CD8-positive, alpha-beta memory T cell (primary cell): ENCODE measurements at regions of chr13 and their contacts with region 1.

Region 1: DNA sequence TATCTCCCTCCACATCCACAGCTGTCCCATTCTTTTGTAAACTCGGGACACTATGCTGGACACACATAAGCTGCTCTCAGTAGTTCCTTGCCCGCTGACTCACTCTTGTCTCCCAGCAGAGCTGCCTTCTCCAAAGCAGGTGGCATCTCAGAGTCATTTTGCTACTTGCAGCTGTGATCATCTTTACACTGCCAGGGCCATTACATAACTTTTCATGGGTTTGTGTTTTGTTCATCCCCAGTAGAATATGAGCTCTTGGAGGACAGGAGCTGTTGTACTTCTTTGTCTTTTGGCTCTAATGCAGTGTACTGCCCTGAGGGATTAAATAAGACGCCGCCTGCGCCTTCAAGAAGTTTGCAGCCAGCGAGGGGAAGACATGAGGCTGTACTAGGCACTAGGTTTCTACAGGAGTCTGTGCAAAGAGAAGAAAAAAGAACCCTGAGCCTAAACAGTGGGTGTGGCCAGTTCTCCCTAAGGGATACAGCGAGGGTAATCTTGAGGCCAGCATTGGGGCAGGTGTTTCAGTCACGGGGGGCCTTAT is 40.8 kb upstream of the GPR183 start:
- DNase-seq: no peak
- H3K4me3 ChIP-seq: no peak overlapping the region
- H3K4me3 Mint-ChIP-seq: peak overlapping the region in 4 of 7 donors; percentile 17 to 57 (median 46)
- H3K27ac ChIP-seq: no peak overlapping the region
- H3K27ac Mint-ChIP-seq: peak overlapping the region; percentile 84 to 99 (median 90)
- H3K4me1 ChIP-seq: peaks cover 64% of the 10 kb centered on the region
- H3K4me1 Mint-ChIP-seq: peaks cover 87 to 99% (median 99%) of the 10 kb centered on the region in 3 donors
- H3K27me3 ChIP-seq: no peaks in the 10 kb centered on the region
- H3K27me3 Mint-ChIP-seq: peaks cover 0 to 1% of the 10 kb centered on the region in 2 donors

Region 2: GRCh38 chr13:99275093-99275469 is 72.9 kb before region 1 on chr13:
- CTCF ChIA-PET with region 1: interaction called, 44 read pairs
- POLR2A ChIA-PET with region 1: interaction called, 11 read pairs
- DNase-seq: peak in 4 of 5 donors; percentile 23 to 73 (median 45)
- H3K4me3 ChIP-seq: no peak overlapping the region
- H3K4me3 Mint-ChIP-seq: peak overlapping the region; percentile 9 to 78 (median 63)
- H3K27ac ChIP-seq: no peak overlapping the region
- H3K27ac Mint-ChIP-seq: peak overlapping the region; percentile 93 to 99 (median 99)
- H3K4me1 ChIP-seq: peaks cover 89% of the 10 kb centered on the region
- H3K4me1 Mint-ChIP-seq: peaks cover 91 to 100% (median 99%) of the 10 kb centered on the region in 3 donors
- H3K27me3 ChIP-seq: no peaks in the 10 kb centered on the region
- H3K27me3 Mint-ChIP-seq: no peaks in the 10 kb centered on the region

Region 3: DNA sequence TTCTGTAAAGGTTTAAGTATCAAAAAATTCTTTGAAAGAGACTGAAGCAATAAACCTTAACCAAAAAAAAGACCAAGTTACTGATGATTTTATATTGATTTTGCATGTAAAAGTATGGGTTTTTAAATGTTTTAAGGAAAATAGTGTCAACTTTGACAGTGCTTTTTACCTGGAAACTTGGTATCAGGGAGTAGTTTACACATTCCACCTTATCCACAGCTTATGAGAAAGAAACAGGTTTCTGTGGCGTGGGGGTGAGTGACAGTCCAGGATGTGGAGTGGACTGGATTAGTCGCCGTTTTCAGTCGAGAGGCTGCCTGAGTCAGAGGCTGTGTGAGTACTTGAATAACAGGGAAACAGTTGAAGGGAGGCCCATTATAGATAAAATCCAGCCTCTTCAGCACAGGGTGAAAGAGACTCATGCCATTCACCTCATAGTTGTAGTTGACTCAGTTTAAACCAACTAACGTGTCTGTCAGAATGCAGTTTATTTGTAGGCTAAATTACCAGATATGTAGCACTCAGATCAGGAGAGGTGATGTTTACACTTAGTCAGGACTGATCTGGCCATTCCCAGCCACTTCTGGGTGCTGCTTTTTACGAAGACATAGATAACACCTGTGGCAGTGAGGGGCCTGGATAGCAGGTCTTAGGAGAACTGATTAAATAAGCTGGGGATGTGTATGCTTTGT is 40.2 kb before region 1 on chr13:
- CTCF ChIA-PET with region 1: interaction called, 18 read pairs
- POLR2A ChIA-PET with region 1: interaction called, 4 read pairs
- DNase-seq: peak in 2 of 5 donors; percentile 33 to 76
- H3K4me3 ChIP-seq: peak overlapping the region; percentile 50
- H3K4me3 Mint-ChIP-seq: peak overlapping the region; percentile 88 to 95 (median 94)
- H3K27ac ChIP-seq: peak overlapping the region; percentile 71
- H3K27ac Mint-ChIP-seq: peak overlapping the region; percentile 89 to 98 (median 94)
- H3K4me1 ChIP-seq: peaks cover 77% of the 10 kb centered on the region
- H3K4me1 Mint-ChIP-seq: peaks cover 75 to 85% (median 84%) of the 10 kb centered on the region in 3 donors
- H3K27me3 ChIP-seq: no peaks in the 10 kb centered on the region
- H3K27me3 Mint-ChIP-seq: no peaks in the 10 kb centered on the region

Region 4: DNA sequence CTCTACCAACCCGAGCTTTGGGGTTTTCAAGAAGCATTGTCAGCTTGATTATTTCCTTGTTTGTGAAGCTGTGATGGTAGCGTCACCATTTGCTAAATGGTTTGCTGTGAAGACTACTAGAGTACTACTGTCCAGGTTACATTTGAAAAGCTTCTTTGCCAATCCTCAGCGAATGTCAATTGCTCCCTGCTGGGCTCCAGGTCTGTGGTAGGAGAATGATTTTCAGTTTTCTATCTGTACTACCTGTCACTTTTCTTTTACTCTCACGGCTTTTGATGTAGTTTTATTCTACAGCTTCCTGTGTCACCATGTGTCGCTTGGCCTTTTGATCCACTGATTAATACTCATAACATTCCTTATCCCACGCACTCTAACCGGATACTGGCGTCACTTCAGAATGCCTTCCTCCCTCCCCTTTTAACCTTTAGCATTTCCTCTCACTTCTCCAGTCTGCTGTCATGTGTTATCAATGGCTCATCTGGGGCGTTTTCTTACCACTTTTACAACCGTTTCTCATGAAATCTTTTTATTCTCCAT is 33.3 kb before region 1 on chr13:
- CTCF ChIA-PET with region 1: interaction called, 11 read pairs
- POLR2A ChIA-PET with region 1: interaction called, 3 read pairs
- DNase-seq: peak in 4 of 5 donors; percentile 40 to 78 (median 72)
- H3K4me3 ChIP-seq: peak overlapping the region; percentile 30
- H3K4me3 Mint-ChIP-seq: peak overlapping the region; percentile 74 to 87 (median 80)
- H3K27ac ChIP-seq: peak overlapping the region; percentile 57
- H3K27ac Mint-ChIP-seq: peak overlapping the region; percentile 71 to 100 (median 94)
- H3K4me1 ChIP-seq: peaks cover 81% of the 10 kb centered on the region
- H3K4me1 Mint-ChIP-seq: peaks cover 72 to 90% (median 85%) of the 10 kb centered on the region in 3 donors
- H3K27me3 ChIP-seq: no peaks in the 10 kb centered on the region
- H3K27me3 Mint-ChIP-seq: peaks cover 0 to 2% of the 10 kb centered on the region in 2 donors

Region 5: GRCh38 chr13:99329477-99329876 is 18.5 kb before region 1 on chr13:
- CTCF ChIA-PET with region 1: interaction called, 13 read pairs
- POLR2A ChIA-PET with region 1: interaction called, 4 read pairs
- DNase-seq: no peak
- H3K4me3 ChIP-seq: no peak overlapping the region
- H3K4me3 Mint-ChIP-seq: no peak overlapping the region
- H3K27ac ChIP-seq: no peak overlapping the region
- H3K27ac Mint-ChIP-seq: peak overlapping the region in 2 of 8 donors; percentile 3 to 60
- H3K4me1 ChIP-seq: peaks cover 25% of the 10 kb centered on the region
- H3K4me1 Mint-ChIP-seq: peaks cover 53 to 84% (median 76%) of the 10 kb centered on the region in 3 donors
- H3K27me3 ChIP-seq: no peaks in the 10 kb centered on the region
- H3K27me3 Mint-ChIP-seq: no peaks in the 10 kb centered on the region